Natural killer cell (primary cell): ENCODE measurements at regions of chr19 and their contacts with region 1.

Region 1: DNA sequence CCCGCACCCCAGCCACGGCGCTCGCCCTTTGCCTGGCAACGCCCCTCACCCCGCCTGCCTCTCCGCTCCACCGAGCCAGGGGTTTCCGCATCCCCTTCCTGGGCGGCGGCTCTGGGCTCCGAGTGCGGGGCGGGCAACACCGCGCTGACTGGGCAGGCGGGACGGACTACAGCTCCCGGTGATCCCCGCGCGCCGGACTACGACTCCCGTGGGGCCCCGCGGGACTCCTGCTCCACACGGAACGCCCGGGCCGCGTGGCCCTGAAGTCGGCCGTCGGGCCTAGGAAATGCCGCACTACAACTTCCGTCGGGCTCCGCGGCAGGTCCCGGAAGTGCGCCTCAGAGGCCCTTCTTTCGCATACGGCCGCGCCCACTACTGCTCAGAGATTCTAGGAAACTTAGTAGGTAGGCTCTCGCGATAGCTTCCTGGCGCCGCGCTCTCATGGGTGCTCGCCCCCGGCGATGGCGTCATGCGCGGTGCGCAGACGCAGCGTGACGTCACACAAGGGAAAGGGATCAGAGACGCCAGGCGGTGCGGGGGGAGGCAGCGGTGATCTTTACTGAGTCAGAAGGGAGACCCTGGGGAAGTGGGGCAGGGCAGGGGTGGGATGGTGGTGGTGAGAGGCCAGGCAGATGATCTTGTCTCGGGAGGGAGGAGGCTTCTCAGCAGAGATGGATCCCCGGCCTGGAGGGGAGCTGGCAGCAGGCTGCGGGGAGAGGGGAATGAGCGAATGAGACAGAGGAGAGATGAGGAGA is at the start of gene JOSD2:
- DNase-seq: peak; percentile 93 to 99
- ATAC-seq: peak; percentile 88 to 95 (median 90)
- H3K4me3 ChIP-seq: peak within 1 kb of the TSS; percentile 59
- H3K4me3 Mint-ChIP-seq: peak within 1 kb of the TSS; percentile 91
- H3K27ac ChIP-seq: peak within 1 kb of the TSS; percentile 93
- H3K27ac Mint-ChIP-seq: peak within 1 kb of the TSS; percentile 87 to 100
- H3K4me1 ChIP-seq: peaks cover 19% of the 10 kb centered on the region
- H3K4me1 Mint-ChIP-seq: peaks cover 19 to 34% of the 10 kb centered on the region in 2 donors
- H3K27me3 ChIP-seq: no peaks in the 10 kb centered on the region
- H3K27me3 Mint-ChIP-seq: peaks cover 0 to 3% of the 10 kb centered on the region in 2 donors
- CTCF ChIP-seq: no peak
- total RNA-seq, gene JOSD2: 18.8 to 22.0 (median 20.3) TPM

Region 2: GRCh38 chr19:50476224-50476942 is 34.9 kb before region 1 on chr19 and contains the starts of genes EMC10 and GARIN5A:
- intact Hi-C with region 1: loop called (anchors 1 kb)
- DNase-seq: peak; percentile 94 to 98
- ATAC-seq: peak; percentile 94 to 96 (median 96)
- H3K4me3 ChIP-seq: peak within 1 kb of the TSS; percentile 78
- H3K4me3 Mint-ChIP-seq: peak within 1 kb of the TSS; percentile 99
- H3K27ac ChIP-seq: peak within 1 kb of the TSS; percentile 76
- H3K27ac Mint-ChIP-seq: peak within 1 kb of the TSS; percentile 91 to 99
- H3K4me1 ChIP-seq: peaks cover 25% of the 10 kb centered on the region
- H3K4me1 Mint-ChIP-seq: peaks cover 30 to 48% of the 10 kb centered on the region in 2 donors
- H3K27me3 ChIP-seq: no peaks in the 10 kb centered on the region
- H3K27me3 Mint-ChIP-seq: no peaks in the 10 kb centered on the region
- CTCF ChIP-seq: no peak
- total RNA-seq, gene EMC10: 79.5 to 85.1 (median 80.1) TPM
- total RNA-seq, gene GARIN5A: 0.59 TPM in 1 of 3 donors, not detected in the others

Region 3: GRCh38 chr19:50556282-50557008 is 45.2 kb after region 1 on chr19:
- intact Hi-C with region 1: no loop called
- DNase-seq: peak; percentile 74 to 82
- ATAC-seq: peak; percentile 65 to 85 (median 84)
- H3K4me3 ChIP-seq: peak overlapping the region; percentile 37
- H3K4me3 Mint-ChIP-seq: peak overlapping the region; percentile 94
- H3K27ac ChIP-seq: no peak overlapping the region
- H3K27ac Mint-ChIP-seq: peak overlapping the region in 1 of 2 donors; percentile 15
- H3K4me1 ChIP-seq: peaks cover 13% of the 10 kb centered on the region
- H3K4me1 Mint-ChIP-seq: peaks cover 5 to 17% of the 10 kb centered on the region in 2 donors
- H3K27me3 ChIP-seq: peaks cover 12% of the 10 kb centered on the region
- H3K27me3 Mint-ChIP-seq: peaks cover 40 to 57% of the 10 kb centered on the region in 2 donors
- CTCF ChIP-seq: peak; percentile 87